Activated CD4-positive, alpha-beta T cell treated with anti-CD3 and anti-CD28 coated beads for 36 hours (primary cell): ENCODE measurements at regions of chr6 and their contacts with region 1.

Region 1: GRCh38 chr6:74574794-74575193 is 631.1 kb downstream of the COL12A1 start:
- DNase-seq: no peak
- ATAC-seq: no peak
- H3K4me3 Mint-ChIP-seq: no peak overlapping the region
- H3K27ac Mint-ChIP-seq: no peak overlapping the region
- H3K4me1 Mint-ChIP-seq: no peaks in the 10 kb centered on the region
- H3K27me3 Mint-ChIP-seq: no peaks in the 10 kb centered on the region

Region 2: DNA sequence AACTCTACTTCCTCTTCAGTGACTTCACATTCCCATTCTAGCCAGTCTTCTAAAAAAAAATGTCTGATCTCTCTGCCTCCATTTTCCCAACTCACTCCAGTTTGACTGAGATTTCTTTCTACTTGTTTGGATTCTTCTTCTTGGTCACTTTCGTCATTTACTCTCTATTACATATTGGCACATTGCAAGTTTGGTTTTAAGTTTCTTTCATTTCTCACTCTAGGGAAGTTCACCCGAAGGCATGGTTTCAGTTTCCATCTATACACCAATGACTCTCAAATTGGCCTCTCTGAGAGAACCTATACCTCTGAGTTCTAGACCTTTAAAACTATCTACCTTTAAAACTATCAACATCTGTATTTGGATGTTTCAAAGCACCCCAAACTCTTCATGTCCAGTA is 827.5 kb before region 1 on chr6:
- CTCF ChIA-PET with region 1: no interaction called
- POLR2A ChIA-PET with region 1: no interaction called
- intact Hi-C with region 1: loop called in 1 of 2 experiments (anchors 10 kb)
- DNase-seq: no peak
- ATAC-seq: peak; percentile 94
- H3K4me3 Mint-ChIP-seq: no peak overlapping the region
- H3K27ac Mint-ChIP-seq: no peak overlapping the region
- H3K4me1 Mint-ChIP-seq: no peaks in the 10 kb centered on the region
- H3K27me3 Mint-ChIP-seq: no peaks in the 10 kb centered on the region

Region 3: DNA sequence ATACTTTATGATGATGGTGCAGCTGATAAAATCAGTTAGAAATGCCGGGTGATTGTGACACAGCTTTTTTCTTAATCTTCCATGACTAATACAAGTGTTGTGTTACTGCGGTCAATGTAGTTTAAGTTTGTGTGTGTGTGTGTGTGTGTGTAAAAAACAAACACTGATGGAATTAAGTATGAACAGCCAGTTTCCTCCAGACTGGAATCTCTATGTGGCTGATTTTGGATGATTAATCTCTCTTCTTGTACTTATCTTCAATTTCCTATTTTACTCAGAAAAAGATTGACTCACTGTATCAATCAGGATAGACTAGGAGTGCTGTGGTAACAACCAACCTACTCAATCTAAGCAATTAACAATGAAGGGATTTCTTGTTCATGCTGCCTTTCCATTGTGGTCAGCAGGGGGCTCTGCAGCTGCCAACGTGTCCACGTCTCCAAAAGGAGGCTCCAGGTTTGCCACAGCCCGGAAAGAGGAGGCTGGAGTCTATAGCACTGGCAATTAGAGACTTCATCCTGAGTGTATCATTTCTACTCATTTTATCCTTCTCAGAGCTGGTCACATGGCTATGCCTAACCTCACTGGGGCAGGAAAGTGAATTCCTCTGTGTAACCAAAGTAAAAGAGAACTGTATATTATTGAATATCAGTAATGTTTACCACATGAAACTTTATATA is 771.1 kb before region 1 on chr6:
- CTCF ChIA-PET with region 1: no interaction called
- POLR2A ChIA-PET with region 1: no interaction called
- intact Hi-C with region 1: no loop called
- DNase-seq: no peak
- ATAC-seq: no peak
- H3K4me3 Mint-ChIP-seq: no peak overlapping the region
- H3K27ac Mint-ChIP-seq: no peak overlapping the region
- H3K4me1 Mint-ChIP-seq: peaks cover 3% of the 10 kb centered on the region
- H3K27me3 Mint-ChIP-seq: no peaks in the 10 kb centered on the region